Ascending aorta (tissue), 2 donors: ENCODE measurements at regions of chr12 and their contacts with region 1.

Region 1: GRCh38 chr12:113221181-113221997 is at the start of gene TPCN1:
- DNase-seq: peak; percentile 99 to 100
- H3K4me3 ChIP-seq: peak within 1 kb of the TSS; percentile 84 to 91
- H3K27ac ChIP-seq: peak within 1 kb of the TSS; percentile 82 to 94
- H3K4me1 ChIP-seq: peaks cover 18 to 33% of the 10 kb centered on the region in 2 donors
- H3K27me3 ChIP-seq: no peaks in the 10 kb centered on the region
- CTCF ChIP-seq: peak in 1 of 3 experiments; percentile 9
- total RNA-seq, gene TPCN1: 56.3 TPM

Region 2: GRCh38 chr12:113244047-113244460 is 22.7 kb after region 1 on chr12:
- intact Hi-C with region 1: loop called (anchors 1 kb)
- DNase-seq: peak in 1 of 2 donors; percentile 91
- H3K4me3 ChIP-seq: peak overlapping the region in 1 of 2 donors; percentile 34
- H3K27ac ChIP-seq: peak overlapping the region; percentile 86 to 94
- H3K4me1 ChIP-seq: peaks cover 48 to 78% of the 10 kb centered on the region in 2 donors
- H3K27me3 ChIP-seq: no peaks in the 10 kb centered on the region
- CTCF ChIP-seq: no peak

Region 3: DNA sequence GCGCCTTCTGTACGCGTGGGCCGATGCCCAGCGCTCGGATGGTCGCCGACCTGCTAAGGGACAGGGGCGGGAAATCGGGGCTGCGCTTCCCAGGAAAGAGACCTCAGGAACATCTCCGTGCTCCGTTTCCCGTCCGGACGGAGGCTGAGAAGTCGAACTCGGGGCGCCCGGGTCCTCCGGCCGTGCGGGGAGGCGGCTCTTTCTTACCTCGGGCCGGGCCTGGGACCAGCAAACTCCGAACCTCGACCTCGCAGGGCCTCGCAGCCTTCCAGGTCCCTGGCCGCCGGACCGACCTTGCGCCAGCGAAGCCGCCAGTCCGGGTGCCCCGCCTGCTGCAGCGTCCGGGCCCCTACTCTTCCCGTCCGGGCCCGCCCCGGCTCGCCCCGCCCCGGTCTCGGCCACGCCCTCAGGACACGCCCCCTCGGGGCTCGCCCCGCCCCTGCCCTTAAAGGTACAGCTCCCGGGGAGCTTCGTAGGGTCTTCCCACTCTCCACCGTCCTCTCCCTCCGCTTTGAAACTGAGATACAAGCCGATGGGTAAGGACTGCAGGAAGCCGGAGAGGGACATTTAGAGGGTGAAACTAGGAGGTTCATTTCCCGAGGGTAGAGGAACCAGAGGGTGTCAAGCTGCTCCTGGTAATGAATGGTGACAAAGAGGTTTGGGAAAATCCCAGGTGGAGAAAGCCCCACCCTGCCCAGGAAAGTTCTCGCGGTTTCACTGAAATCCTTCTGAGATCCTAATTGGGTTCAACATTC is 113.6 kb after region 1 on chr12 and contains the start of gene SLC8B1:
- intact Hi-C with region 1: loop called (anchors 1 kb)
- DNase-seq: peak; percentile 47 to 94
- H3K4me3 ChIP-seq: peak within 1 kb of the TSS; percentile 68 to 86
- H3K27ac ChIP-seq: peak within 1 kb of the TSS; percentile 69 to 78
- H3K4me1 ChIP-seq: peaks cover 0 to 20% of the 10 kb centered on the region in 2 donors
- H3K27me3 ChIP-seq: no peaks in the 10 kb centered on the region
- CTCF ChIP-seq: peak in 1 of 3 experiments; percentile 31
- total RNA-seq, gene SLC8B1: 114 TPM